GM23248 (cell line): ENCODE measurements at regions of chr4 and their contacts with region 1.

Region 1: GRCh38 chr4:109433205-109434006 is at the start of gene SEC24B:
- DNase-seq: peak; percentile 93
- H3K4me3 ChIP-seq: peak within 1 kb of the TSS; percentile 82
- H3K27ac ChIP-seq: peak within 1 kb of the TSS; percentile 85
- H3K4me1 ChIP-seq: peaks cover 34% of the 10 kb centered on the region
- H3K27me3 ChIP-seq: no peaks in the 10 kb centered on the region
- total RNA-seq, gene SEC24B: 25.0 and 26.6 TPM in 2 replicates

Region 2: DNA sequence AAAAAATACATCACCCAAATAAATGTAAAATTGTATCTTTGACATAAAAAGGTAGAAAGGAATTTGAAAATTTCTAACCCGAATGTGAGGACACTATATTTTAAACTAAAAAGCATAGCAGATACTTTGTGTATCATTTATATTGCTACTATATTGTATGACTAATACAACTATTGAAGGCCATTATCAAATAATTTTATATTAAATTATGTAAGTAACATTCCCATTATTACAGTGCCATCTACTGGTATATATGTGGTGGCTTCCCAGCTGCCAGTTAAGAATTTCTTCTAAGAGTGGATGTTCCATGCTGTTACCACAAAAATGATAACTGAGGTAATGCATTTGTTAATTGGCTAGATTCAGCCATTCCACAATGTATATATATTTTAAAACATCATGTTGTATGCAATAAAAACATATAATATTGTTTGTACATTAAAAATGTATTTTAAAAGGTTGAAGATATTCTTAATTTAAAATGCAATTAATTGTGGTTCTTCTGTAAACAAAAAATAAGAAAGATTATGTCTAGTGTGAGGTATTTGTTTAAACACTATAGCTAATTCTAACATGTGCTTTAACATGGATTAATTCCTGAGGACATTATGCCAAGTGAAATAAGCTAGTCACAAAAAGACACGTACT is 544.6 kb after region 1 on chr4:
- in situ Hi-C with region 1: loop called (anchors 10 kb)
- DNase-seq: peak; percentile 78
- H3K4me3 ChIP-seq: no peak overlapping the region
- H3K27ac ChIP-seq: no peak overlapping the region
- H3K4me1 ChIP-seq: peaks cover 17% of the 10 kb centered on the region
- H3K27me3 ChIP-seq: no peaks in the 10 kb centered on the region

Region 3: DNA sequence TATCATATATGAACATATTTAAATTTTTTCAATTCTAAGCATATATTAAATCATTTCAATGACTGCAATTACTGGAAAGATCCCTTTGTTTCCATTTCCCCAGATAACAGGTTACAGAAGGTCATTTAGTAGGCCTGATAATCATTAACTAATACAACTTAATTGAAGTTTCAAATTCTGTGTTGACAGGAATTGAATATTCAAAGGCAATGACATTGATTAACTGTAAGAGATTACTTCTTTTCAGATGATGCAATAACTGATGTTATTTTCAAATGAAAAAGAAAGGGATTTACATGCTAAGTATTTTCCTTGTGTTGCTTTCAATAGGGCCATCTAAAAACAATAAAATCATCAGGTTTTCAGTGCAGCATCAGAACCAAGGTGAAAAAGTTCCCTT is 961.5 kb after region 1 on chr4:
- in situ Hi-C with region 1: no loop called
- DNase-seq: no peak
- H3K4me3 ChIP-seq: no peak overlapping the region
- H3K27ac ChIP-seq: no peak overlapping the region
- H3K4me1 ChIP-seq: no peaks in the 10 kb centered on the region
- H3K27me3 ChIP-seq: peaks cover 18% of the 10 kb centered on the region